ENCODE measurements at regions of chr11 and their contacts with region 1.

Region 1: GRCh38 chr11:93741094-93741881 is at the starts of genes C11orf54 and TAF1D:
- DNase-seq: peak; percentile 96
- H3K4me3 Mint-ChIP-seq: peak within 1 kb of the TSS; percentile 99
- H3K27ac Mint-ChIP-seq: peak within 1 kb of the TSS; percentile 99
- H3K4me1 Mint-ChIP-seq: peaks cover 45% of the 10 kb centered on the region
- H3K27me3 Mint-ChIP-seq: no peaks in the 10 kb centered on the region
- total RNA-seq, gene C11orf54: 19.3 and 21.2 TPM in 2 replicates
- total RNA-seq, gene TAF1D: 344 TPM in 2 replicates

Region 2: DNA sequence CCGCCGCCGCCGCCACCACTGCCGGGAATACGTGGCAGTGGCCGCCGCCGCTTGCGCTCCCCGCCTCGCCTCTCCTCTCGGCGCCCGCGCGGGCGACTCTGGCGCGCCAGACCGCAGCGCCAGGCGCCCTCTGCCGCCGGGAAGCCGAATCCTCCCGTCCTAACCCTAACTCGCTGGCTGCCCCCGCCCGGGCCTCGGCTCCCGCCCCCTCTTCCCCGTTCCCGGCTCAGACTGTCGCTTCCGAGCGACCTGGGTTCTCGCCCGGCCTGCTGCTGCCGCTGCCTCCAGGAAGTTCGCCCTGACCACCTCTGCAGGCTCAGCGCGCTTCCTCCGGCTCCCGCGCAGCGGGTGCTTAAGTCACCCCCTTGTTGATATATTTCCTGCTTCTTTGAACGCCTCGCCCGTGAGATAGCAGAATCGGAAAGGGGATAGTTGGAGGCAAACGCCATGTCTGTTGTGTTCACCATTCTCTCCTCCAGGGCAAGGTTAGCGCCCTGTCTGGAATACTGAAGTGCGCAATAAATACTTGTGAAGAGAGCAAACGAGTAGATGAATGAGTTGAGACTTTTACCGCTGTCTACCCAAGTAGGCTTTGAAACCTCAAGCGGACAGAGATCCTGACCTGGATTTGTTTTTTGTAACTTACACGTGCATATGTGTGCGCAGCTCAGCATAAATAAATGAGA is 197.9 kb before region 1 on chr11 and contains the start of gene SMCO4:
- intact Hi-C with region 1: loop called (anchors 1 kb)
- DNase-seq: peak; percentile 68
- H3K4me3 Mint-ChIP-seq: peak within 1 kb of the TSS; percentile 90
- H3K27ac Mint-ChIP-seq: peak within 1 kb of the TSS; percentile 79
- H3K4me1 Mint-ChIP-seq: peaks cover 31% of the 10 kb centered on the region
- H3K27me3 Mint-ChIP-seq: peaks cover 8% of the 10 kb centered on the region
- total RNA-seq, gene SMCO4: 40.8 and 41.5 TPM in 2 replicates

Region 3: GRCh38 chr11:93570759-93571413 is 170.4 kb before region 1 on chr11:
- intact Hi-C with region 1: no loop called
- DNase-seq: no peak
- H3K4me3 Mint-ChIP-seq: no peak overlapping the region
- H3K27ac Mint-ChIP-seq: no peak overlapping the region
- H3K4me1 Mint-ChIP-seq: no peaks in the 10 kb centered on the region
- H3K27me3 Mint-ChIP-seq: peaks cover 2% of the 10 kb centered on the region

Region 4: GRCh38 chr11:93689240-93689639 is 52.0 kb before region 1 on chr11:
- intact Hi-C with region 1: loop called (anchors 1 kb)
- DNase-seq: no peak
- H3K4me3 Mint-ChIP-seq: no peak overlapping the region
- H3K27ac Mint-ChIP-seq: peak overlapping the region; percentile 83
- H3K4me1 Mint-ChIP-seq: peaks cover 28% of the 10 kb centered on the region
- H3K27me3 Mint-ChIP-seq: no peaks in the 10 kb centered on the region

Region 5: DNA sequence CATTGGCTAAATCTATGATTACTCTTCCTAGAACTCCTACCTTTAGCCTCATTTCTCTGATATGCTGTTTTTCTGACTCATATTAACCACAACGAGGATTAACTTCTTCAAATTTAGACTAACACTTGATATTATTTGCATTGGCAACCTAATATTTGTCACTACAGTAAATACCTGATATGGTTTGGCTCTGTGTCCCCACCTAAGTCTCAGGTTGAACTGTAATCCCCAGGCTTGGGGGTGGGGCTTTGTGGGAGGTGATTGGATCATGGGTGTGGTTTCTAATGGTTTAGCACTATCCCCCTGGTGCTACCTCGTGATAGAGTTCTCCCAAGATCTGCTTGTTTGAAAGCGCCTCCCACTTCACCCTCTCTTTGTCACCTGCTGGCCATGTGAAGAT is 25.7 kb after region 1 on chr11:
- intact Hi-C with region 1: no loop called
- DNase-seq: no peak
- H3K4me3 Mint-ChIP-seq: no peak overlapping the region
- H3K27ac Mint-ChIP-seq: no peak overlapping the region
- H3K4me1 Mint-ChIP-seq: no peaks in the 10 kb centered on the region
- H3K27me3 Mint-ChIP-seq: no peaks in the 10 kb centered on the region

Region 6: GRCh38 chr11:93784152-93784934 is 43.1 kb after region 1 on chr11 and contains the start of gene MED17:
- intact Hi-C with region 1: loop called (anchors 1 kb)
- DNase-seq: peak; percentile 85
- H3K4me3 Mint-ChIP-seq: peak within 1 kb of the TSS; percentile 95
- H3K27ac Mint-ChIP-seq: peak within 1 kb of the TSS; percentile 89
- H3K4me1 Mint-ChIP-seq: peaks cover 49% of the 10 kb centered on the region
- H3K27me3 Mint-ChIP-seq: no peaks in the 10 kb centered on the region
- total RNA-seq, gene MED17: 48.5 and 50.8 TPM in 2 replicates

Region 7: DNA sequence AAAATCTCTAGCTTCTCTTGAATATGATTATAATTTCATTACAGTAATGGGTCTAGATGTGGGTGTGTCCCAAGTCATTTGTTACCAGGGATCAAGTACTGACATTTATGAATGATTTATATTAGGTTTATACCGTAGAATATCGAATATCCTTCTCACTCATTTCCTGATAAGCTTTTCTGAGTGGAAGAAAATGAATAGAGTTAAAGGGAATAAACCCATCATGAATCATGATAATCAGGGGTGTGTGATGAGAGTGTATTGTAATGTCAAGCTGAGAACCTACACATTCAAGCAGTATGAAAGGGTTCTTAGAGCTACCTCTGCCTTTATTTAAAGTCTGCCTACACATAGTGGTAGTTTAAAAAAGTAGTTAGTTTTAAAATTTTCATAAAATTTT is 60.1 kb after region 1 on chr11:
- intact Hi-C with region 1: no loop called
- DNase-seq: no peak
- H3K4me3 Mint-ChIP-seq: no peak overlapping the region
- H3K27ac Mint-ChIP-seq: no peak overlapping the region
- H3K4me1 Mint-ChIP-seq: no peaks in the 10 kb centered on the region
- H3K27me3 Mint-ChIP-seq: no peaks in the 10 kb centered on the region

Region 8: GRCh38 chr11:94151903-94152677 is 410.8 kb after region 1 on chr11:
- intact Hi-C with region 1: loop called (anchors 5 kb)
- DNase-seq: no peak
- H3K4me3 Mint-ChIP-seq: no peak overlapping the region
- H3K27ac Mint-ChIP-seq: peak overlapping the region; percentile 71
- H3K4me1 Mint-ChIP-seq: peaks cover 57% of the 10 kb centered on the region
- H3K27me3 Mint-ChIP-seq: no peaks in the 10 kb centered on the region

Region 9: DNA sequence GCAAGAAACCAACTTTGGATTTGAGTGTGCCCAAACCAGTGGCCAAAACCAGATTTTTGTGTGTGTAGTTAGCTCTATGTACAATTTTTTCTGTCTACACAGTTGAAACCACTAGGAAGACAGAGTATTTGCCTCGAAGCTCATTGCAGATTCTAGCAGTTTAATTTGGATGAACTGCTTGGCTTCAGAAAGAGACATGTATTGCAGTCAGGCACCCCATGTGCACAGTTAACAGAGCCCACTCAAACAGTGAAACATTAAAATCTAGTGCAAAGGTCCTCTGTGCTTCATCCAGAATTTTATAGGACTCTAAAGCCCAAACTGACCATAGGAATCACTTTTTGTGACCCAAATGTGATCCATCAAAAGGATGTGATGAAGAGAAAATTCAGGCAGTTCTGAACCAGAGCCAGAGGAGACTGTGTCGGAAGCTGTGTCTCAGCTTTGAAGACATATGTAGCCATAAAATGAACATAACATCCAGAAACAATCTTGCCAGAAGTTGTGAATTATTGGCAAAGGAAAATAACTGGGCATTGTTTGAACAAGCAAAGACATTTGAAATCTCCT is 470.1 kb after region 1 on chr11:
- intact Hi-C with region 1: no loop called
- DNase-seq: no peak
- H3K4me3 Mint-ChIP-seq: no peak overlapping the region
- H3K27ac Mint-ChIP-seq: no peak overlapping the region
- H3K4me1 Mint-ChIP-seq: no peaks in the 10 kb centered on the region
- H3K27me3 Mint-ChIP-seq: peaks cover 2% of the 10 kb centered on the region

Region 10: DNA sequence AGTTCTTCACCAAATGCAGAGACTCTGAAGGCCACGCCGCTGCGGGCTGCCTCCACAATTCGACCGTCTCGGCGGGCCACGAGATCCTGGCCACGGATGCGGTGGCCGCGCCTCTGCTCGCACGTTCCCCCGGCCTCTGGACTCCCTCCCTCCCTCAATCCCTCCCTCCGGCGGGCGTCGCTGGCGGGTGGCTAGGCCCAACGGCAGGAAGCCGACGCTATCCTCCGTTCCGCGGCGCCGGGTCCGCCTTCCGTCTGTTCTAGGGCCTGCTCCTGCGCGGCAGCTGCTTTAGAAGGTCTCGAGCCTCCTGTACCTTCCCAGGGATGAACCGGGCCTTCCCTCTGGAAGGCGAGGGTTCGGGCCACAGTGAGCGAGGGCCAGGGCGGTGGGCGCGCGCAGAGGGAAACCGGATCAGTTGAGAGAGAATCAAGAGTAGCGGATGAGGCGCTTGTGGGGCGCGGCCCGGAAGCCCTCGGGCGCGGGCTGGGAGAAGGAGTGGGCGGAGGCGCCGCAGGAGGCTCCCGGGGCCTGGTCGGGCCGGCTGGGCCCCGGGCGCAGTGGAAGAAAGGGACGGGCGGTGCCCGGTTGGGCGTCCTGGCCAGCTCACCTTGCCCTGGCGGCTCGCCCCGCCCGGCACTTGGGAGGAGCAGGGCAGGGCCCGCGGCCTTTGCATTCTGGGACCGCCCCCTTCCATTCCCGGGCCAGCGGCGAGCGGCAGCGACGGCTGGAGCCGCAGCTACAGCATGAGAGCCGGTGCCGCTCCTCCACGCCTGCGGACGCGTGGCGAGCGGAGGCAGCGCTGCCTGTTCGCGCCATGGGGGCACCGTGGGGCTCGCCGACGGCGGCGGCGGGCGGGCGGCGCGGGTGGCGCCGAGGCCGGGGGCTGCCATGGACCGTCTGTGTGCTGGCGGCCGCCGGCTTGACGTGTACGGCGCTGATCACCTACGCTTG is 802.7 kb after region 1 on chr11 and contains the start of gene FUT4:
- intact Hi-C with region 1: loop called (anchors 5 kb)
- DNase-seq: peak; percentile 72
- H3K4me3 Mint-ChIP-seq: peak within 1 kb of the TSS; percentile 99
- H3K27ac Mint-ChIP-seq: peak within 1 kb of the TSS; percentile 100
- H3K4me1 Mint-ChIP-seq: peaks cover 32% of the 10 kb centered on the region
- H3K27me3 Mint-ChIP-seq: no peaks in the 10 kb centered on the region
- total RNA-seq, gene FUT4: 8.4 and 8.9 TPM in 2 replicates